ENCODE measurements at regions of chr4 and their contacts with region 1.

Region 1: GRCh38 chr4:89657931-89658700 is 178.8 kb downstream of the SNCA start:
- DNase-seq: no peak
- H3K4me3 Mint-ChIP-seq: no peak overlapping the region
- H3K27ac Mint-ChIP-seq: no peak overlapping the region
- H3K4me1 Mint-ChIP-seq: no peaks in the 10 kb centered on the region
- H3K27me3 Mint-ChIP-seq: peaks cover 7% of the 10 kb centered on the region

Region 2: GRCh38 chr4:89164400-89164799 is 493.7 kb before region 1 on chr4:
- CTCF ChIA-PET with region 1: no interaction called
- intact Hi-C with region 1: loop called (anchors 10 kb)
- DNase-seq: no peak
- H3K4me3 Mint-ChIP-seq: no peak overlapping the region
- H3K27ac Mint-ChIP-seq: no peak overlapping the region
- H3K4me1 Mint-ChIP-seq: no peaks in the 10 kb centered on the region
- H3K27me3 Mint-ChIP-seq: peaks cover 4% of the 10 kb centered on the region

Region 3: GRCh38 chr4:89482248-89482647 is 175.9 kb before region 1 on chr4:
- CTCF ChIA-PET with region 1: no interaction called
- intact Hi-C with region 1: loop called (anchors 10 kb)
- DNase-seq: peak; percentile 28
- H3K4me3 Mint-ChIP-seq: no peak overlapping the region
- H3K27ac Mint-ChIP-seq: no peak overlapping the region
- H3K4me1 Mint-ChIP-seq: peaks cover 4% of the 10 kb centered on the region
- H3K27me3 Mint-ChIP-seq: no peaks in the 10 kb centered on the region

Region 4: DNA sequence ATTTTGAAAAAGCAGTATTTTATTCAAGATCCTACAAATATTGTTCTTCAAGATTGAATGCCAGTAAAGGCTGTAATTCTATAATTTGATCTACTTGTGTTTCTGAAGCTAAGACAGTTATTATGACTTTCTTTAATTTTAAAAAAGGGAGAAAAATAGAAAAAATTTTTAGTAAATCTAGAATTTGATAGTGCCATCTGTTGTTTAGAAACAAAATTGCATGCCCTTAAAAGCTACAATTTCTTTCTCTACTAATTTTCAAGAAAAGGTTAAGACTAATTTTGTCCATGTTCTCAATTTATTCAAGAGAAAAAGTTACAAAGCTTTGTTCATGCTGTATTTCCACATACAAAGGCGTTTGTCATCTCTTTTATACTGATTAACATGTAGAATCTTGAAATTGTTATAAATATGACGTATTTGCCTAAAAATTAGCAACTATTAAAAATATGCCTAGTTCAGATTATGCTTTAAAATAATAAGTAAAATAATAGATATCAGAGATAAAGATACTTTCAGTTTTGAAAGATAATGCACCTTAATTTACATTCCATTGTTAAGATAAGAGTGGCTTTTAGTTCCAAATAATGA is 211.0 kb after region 1 on chr4:
- CTCF ChIA-PET with region 1: interaction called, 4 read pairs
- intact Hi-C with region 1: loop called (anchors 2 kb)
- DNase-seq: no peak
- H3K4me3 Mint-ChIP-seq: no peak overlapping the region
- H3K27ac Mint-ChIP-seq: no peak overlapping the region
- H3K4me1 Mint-ChIP-seq: no peaks in the 10 kb centered on the region
- H3K27me3 Mint-ChIP-seq: peaks cover 2% of the 10 kb centered on the region

Measured in activated naive CD4-positive, alpha-beta T cell treated with anti-CD3 and anti-CD28 coated beads for 36 hours (primary cell).